Activated CD4-positive, alpha-beta memory T cell treated with anti-CD3 and anti-CD28 coated beads, Interleukin-2, amount 10 ng/mL, durations not matched to agents 7 days and 5 days (primary cell): ENCODE measurements at regions of chr5 and their contacts with region 1.

Region 1: GRCh38 chr5:14809369-14810155 is 62.0 kb downstream of the ANKH start:
- DNase-seq: peak; percentile 87
- H3K4me3 Mint-ChIP-seq: peak overlapping the region; percentile 71
- H3K27ac Mint-ChIP-seq: peak overlapping the region; percentile 85
- H3K4me1 Mint-ChIP-seq: peaks cover 52% of the 10 kb centered on the region
- H3K27me3 Mint-ChIP-seq: no peaks in the 10 kb centered on the region

Region 2: DNA sequence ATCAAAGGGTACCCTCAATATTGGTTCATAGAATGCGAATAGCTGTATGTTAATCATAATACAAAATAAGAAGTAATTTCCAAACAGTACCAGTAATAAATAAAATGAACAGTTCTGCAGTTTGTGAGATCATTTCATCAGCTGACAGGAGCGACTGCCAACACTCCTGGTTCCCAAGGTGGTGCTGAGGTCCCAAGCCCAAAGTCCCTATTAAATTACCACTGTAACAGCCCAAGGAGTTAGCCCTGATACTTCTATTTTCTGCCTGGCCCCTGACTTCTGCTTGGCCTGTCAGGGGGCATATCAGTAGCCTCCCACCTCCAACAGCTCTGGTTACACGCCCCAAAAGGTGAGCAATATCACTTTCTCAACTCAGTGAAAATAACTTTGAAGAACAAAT is 14.9 kb after region 1 on chr5:
- CTCF ChIA-PET with region 1: no interaction called
- POLR2A ChIA-PET with region 1: interaction called, 10 read pairs
- DNase-seq: no peak
- H3K4me3 Mint-ChIP-seq: no peak overlapping the region
- H3K27ac Mint-ChIP-seq: no peak overlapping the region
- H3K4me1 Mint-ChIP-seq: peaks cover 26% of the 10 kb centered on the region
- H3K27me3 Mint-ChIP-seq: no peaks in the 10 kb centered on the region